CD4-positive, alpha-beta T cell (primary cell): ENCODE measurements at regions of chr12 and their contacts with region 1.

Region 1: DNA sequence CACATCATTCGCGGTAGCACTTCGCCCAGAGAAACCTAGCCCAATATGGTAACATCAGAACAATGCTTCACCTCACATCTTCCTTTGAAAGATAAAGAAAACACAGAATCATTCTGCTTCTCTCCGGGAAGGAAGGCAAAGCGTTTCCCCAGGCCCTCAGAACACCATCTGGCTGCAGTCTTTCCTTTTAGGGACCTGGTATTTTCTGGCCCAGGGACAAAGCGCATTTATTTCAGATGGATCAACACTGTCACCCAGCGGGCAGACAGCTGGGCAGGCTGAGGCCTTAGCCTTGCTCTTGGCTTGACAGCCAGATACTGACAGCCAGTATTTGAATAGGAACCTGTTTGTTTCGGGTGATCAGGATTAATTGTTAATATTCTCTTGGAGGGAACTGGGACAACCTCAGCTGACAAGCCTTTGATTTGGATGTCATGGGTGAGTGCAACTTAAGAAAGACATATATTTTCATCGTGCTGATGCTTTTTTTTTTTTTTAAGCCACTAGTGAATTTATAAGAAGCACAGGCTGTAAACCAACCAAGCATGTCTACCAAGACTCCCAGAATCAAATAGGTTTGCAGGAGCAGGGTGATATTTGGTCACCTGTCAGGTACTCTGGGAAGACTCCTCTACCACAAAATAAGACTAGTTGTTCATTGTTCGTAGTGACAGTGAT is 118.9 kb downstream of the VEZT start:
- DNase-seq: no peak
- ATAC-seq: no peak
- H3K4me3 ChIP-seq: no peak overlapping the region
- H3K4me3 Mint-ChIP-seq: no peak overlapping the region
- H3K27ac ChIP-seq: no peak overlapping the region
- H3K27ac Mint-ChIP-seq: no peak overlapping the region
- H3K4me1 ChIP-seq: no peaks in the 10 kb centered on the region
- H3K4me1 Mint-ChIP-seq: peaks cover 6% of the 10 kb centered on the region
- H3K27me3 ChIP-seq: no peaks in the 10 kb centered on the region
- H3K27me3 Mint-ChIP-seq: no peaks in the 10 kb centered on the region
- CTCF ChIP-seq: no peak

Region 2: DNA sequence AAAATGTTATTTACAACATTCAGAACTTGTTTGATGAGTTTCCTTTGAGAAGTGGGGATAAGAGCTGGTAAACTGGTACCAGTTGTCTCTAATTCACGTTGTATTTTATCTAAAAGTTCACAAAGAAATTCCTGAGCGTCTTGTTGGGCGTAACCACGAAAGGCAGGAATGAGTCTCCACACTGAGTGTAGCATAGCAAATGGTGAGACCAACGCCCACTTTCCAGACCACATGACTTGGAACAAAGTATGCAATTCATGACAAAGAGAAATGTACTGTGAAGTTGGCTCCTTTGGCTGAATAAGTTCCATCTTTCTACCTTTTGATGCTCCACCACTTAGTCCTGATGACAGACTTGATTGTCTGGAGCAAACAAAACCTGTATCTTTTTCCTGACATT is 196.3 kb after region 1 on chr12:
- CTCF ChIA-PET with region 1: interaction called, 5 read pairs
- POLR2A ChIA-PET with region 1: no interaction called
- intact Hi-C with region 1: loop called in 1 of 2 experiments (anchors 10 kb)
- DNase-seq: no peak
- ATAC-seq: no peak
- H3K4me3 ChIP-seq: no peak overlapping the region
- H3K4me3 Mint-ChIP-seq: no peak overlapping the region
- H3K27ac ChIP-seq: no peak overlapping the region
- H3K27ac Mint-ChIP-seq: no peak overlapping the region
- H3K4me1 ChIP-seq: no peaks in the 10 kb centered on the region
- H3K4me1 Mint-ChIP-seq: peaks cover 5% of the 10 kb centered on the region
- H3K27me3 ChIP-seq: no peaks in the 10 kb centered on the region
- H3K27me3 Mint-ChIP-seq: no peaks in the 10 kb centered on the region
- CTCF ChIP-seq: no peak